ENCODE measurements at regions of chr1 and their contacts with region 1.

Region 1: GRCh38 chr1:205591522-205592351 is 40.1 kb downstream of the ELK4 start:
- DNase-seq: peak; percentile 83
- H3K4me3 ChIP-seq: peak overlapping the region in 1 of 3 experiments; percentile 11
- H3K27ac ChIP-seq: no peak overlapping the region
- H3K4me1 ChIP-seq: peaks cover 8% of the 10 kb centered on the region
- H3K27me3 ChIP-seq: no peaks in the 10 kb centered on the region
- CTCF ChIP-seq: peak; percentile 95 to 97
- POLR2A ChIP-seq: no peak

Region 2: GRCh38 chr1:205088341-205088740 is 503.4 kb before region 1 on chr1:
- CTCF ChIA-PET with region 1: no interaction called
- POLR2A ChIA-PET with region 1: no interaction called
- dilution Hi-C with region 1: no loop called
- intact Hi-C with region 1: no loop called
- DNase-seq: no peak
- H3K4me3 ChIP-seq: no peak overlapping the region
- H3K27ac ChIP-seq: no peak overlapping the region
- H3K4me1 ChIP-seq: no peaks in the 10 kb centered on the region
- H3K27me3 ChIP-seq: no peaks in the 10 kb centered on the region
- CTCF ChIP-seq: no peak
- POLR2A ChIP-seq: no peak

Region 3: DNA sequence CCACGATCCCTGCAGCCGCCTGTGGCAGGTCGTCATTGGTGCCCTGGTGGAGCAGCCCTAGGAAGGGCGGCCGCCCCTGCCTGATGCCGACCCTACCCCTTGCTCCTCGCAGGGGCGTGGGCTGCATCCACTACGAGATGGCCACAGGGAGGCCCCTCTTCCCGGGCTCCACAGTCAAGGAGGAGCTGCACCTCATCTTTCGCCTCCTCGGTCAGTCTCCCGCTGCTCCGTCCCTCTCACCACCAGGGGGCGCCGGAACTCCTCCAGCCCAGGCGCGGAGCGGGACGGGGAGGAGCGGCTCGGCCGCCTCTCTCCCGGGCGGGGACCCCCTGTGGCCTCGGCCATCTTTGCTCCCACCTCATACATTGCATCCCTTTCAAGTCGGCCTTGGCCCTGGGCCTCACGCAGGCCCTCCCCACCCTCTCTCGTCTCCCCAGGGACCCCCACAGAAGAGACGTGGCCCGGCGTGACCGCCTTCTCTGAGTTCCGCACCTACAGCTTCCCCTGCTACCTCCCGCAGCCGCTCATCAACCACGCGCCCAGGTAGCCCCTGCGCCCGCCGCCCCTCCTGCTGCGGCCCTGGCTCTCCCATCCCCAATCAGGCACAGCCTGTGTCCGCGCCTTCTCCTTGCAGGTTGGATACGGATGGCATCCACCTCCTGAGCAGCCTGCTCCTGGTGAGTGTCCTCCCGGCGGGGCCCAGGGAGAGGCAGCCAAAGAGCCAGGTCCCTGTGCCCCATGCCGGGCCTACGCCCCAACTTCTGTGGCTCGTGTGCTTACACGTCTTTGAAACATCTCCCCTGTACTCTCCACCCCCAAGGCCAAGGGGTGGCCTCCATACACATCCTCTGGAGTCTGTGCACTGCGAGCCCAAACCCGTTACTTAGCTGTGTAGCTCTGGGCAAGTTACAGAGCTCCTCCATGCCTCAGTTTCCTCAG is 62.6 kb before region 1 on chr1:
- CTCF ChIA-PET with region 1: interaction called, 40 read pairs
- POLR2A ChIA-PET with region 1: no interaction called
- dilution Hi-C with region 1: no loop called
- intact Hi-C with region 1: loop called (anchors 10 kb)
- DNase-seq: peak; percentile 58
- H3K4me3 ChIP-seq: peak overlapping the region in 1 of 3 experiments; percentile 9
- H3K27ac ChIP-seq: no peak overlapping the region
- H3K4me1 ChIP-seq: peaks cover 3% of the 10 kb centered on the region
- H3K27me3 ChIP-seq: no peaks in the 10 kb centered on the region
- CTCF ChIP-seq: peak; percentile 90 to 95
- POLR2A ChIP-seq: no peak

Region 4: DNA sequence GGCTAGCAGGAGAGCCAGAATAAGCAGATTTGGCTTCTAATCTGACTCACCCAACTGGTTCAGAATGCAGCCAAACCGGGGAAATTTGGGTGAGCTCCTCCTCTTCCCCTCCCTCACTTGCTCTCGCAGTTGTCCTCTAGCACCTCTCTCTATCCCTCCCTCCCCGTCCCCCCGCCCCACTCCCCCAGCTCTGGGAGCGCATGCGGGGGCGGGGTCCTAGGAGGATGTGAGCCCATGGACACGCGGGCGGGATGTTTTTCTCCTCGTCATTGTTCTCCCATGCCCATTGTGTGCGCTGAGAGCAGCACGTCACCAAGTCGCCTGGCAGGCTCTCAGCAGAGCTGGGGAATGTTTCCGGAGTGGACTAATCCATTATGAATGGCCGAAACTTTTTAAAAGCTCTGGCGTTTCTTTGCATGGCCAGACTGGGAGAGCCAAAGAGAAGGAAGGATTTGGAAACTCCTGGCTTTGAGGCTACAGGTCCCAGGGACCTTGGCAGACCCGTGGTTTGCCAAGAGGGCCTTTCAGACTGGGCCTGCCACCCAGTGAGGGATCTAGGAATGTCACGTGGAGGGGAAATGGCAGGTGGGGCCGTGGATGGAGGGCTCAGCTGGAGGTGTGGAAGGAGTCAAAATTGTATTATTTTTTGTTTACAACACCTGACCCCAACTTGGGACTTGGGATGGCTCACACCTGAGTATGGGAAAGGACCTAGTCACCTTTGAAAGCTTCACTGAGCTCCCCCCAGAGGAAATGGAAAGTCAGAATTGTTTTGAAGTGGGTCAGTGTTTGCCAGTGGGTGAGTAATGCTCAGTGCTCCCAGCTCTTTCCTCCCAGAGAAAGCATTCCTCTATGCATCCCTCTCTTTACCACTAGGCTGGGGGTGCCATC is 48.1 kb before region 1 on chr1:
- CTCF ChIA-PET with region 1: interaction called, 19 read pairs
- POLR2A ChIA-PET with region 1: interaction called, 3 read pairs
- dilution Hi-C with region 1: no loop called
- intact Hi-C with region 1: no loop called
- DNase-seq: peak; percentile 95
- H3K4me3 ChIP-seq: peak overlapping the region in 2 of 3 experiments; percentile 32 to 39
- H3K27ac ChIP-seq: peak overlapping the region; percentile 98
- H3K4me1 ChIP-seq: peaks cover 9% of the 10 kb centered on the region
- H3K27me3 ChIP-seq: peaks cover 2 to 5% of the 10 kb centered on the region in 2 experiments
- CTCF ChIP-seq: peak in 1 of 2 donors; percentile 5
- POLR2A ChIP-seq: no peak

Region 5: GRCh38 chr1:205631727-205632373 is 40.1 kb after region 1 on chr1 and contains the start of gene ELK4:
- CTCF ChIA-PET with region 1: interaction called, 294 read pairs
- POLR2A ChIA-PET with region 1: interaction called, 9 read pairs
- dilution Hi-C with region 1: no loop called
- intact Hi-C with region 1: loop called (anchors 1 kb)
- DNase-seq: peak; percentile 98
- H3K4me3 ChIP-seq: peak within 1 kb of the TSS; percentile 88 to 97 (median 92)
- H3K27ac ChIP-seq: peak within 1 kb of the TSS; percentile 82
- H3K4me1 ChIP-seq: peaks cover 29% of the 10 kb centered on the region
- H3K27me3 ChIP-seq: no peaks in the 10 kb centered on the region
- CTCF ChIP-seq: peak; percentile 72 to 90
- POLR2A ChIP-seq: peak; percentile 88
- total RNA-seq, gene ELK4: 78.7 and 107 TPM in 2 replicates

Region 6: DNA sequence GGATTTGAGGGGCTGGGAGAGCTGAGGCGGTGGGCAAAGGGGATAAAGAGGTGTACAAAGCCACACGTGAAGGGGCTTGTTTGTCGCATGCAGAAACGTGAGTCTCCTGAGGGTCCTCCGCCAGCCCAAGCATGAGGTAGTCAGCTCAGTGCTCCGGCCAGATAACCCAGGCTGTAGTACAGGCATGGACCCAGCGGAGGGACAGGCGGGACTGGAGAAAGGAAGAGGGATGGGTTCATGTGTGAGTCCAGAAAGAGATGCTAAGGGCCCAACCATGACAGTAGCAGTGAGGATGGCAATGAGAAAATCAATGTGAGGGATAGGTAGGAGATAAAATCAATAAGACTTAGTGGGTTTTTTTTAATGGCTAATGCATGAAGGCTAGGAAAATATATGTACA is 53.8 kb after region 1 on chr1:
- CTCF ChIA-PET with region 1: interaction called, 18 read pairs
- POLR2A ChIA-PET with region 1: no interaction called
- dilution Hi-C with region 1: no loop called
- intact Hi-C with region 1: no loop called
- DNase-seq: no peak
- H3K4me3 ChIP-seq: no peak overlapping the region
- H3K27ac ChIP-seq: no peak overlapping the region
- H3K4me1 ChIP-seq: no peaks in the 10 kb centered on the region
- H3K27me3 ChIP-seq: no peaks in the 10 kb centered on the region
- CTCF ChIP-seq: no peak
- POLR2A ChIP-seq: no peak

Region 7: GRCh38 chr1:205791568-205792180 is 199.9 kb after region 1 on chr1:
- CTCF ChIA-PET with region 1: no interaction called
- POLR2A ChIA-PET with region 1: no interaction called
- dilution Hi-C with region 1: no loop called
- intact Hi-C with region 1: no loop called
- DNase-seq: peak; percentile 53
- H3K4me3 ChIP-seq: no peak overlapping the region
- H3K27ac ChIP-seq: no peak overlapping the region
- H3K4me1 ChIP-seq: no peaks in the 10 kb centered on the region
- H3K27me3 ChIP-seq: no peaks in the 10 kb centered on the region
- CTCF ChIP-seq: peak; percentile 71 to 86
- POLR2A ChIP-seq: no peak

Region 8: GRCh38 chr1:205919026-205919746 is 327.4 kb after region 1 on chr1:
- CTCF ChIA-PET with region 1: no interaction called
- POLR2A ChIA-PET with region 1: no interaction called
- dilution Hi-C with region 1: no loop called
- intact Hi-C with region 1: loop called (anchors 10 kb)
- DNase-seq: peak; percentile 85
- H3K4me3 ChIP-seq: no peak overlapping the region
- H3K27ac ChIP-seq: no peak overlapping the region
- H3K4me1 ChIP-seq: no peaks in the 10 kb centered on the region
- H3K27me3 ChIP-seq: no peaks in the 10 kb centered on the region
- CTCF ChIP-seq: peak; percentile 83 to 86
- POLR2A ChIP-seq: no peak

Measured in endothelial cell of umbilical vein (primary cell).